GM18951 (cell line): ENCODE measurements at regions of chr9 and their contacts with region 1.

Region 1: DNA sequence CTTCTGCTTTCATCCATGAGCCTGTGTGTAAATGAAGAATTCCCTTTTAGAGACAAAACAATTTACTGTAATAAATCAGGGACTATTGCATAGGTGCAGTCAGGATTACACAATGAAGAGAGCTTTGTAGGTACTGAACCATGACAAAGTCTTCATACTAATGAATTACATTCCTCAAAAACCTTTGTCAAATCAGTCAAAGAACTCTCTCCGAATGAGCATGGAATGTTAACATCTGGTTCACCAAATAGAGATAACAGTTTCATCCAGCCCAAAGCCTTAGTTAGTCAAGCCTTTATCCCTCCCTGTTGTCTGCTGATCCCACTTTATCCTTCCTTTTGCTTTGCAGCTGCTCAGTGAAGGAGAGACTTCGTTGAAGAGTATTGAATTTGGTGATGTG is 62.9 kb upstream of the DMRTA1 start:
- POLR2A ChIP-seq: no peak

Region 2: DNA sequence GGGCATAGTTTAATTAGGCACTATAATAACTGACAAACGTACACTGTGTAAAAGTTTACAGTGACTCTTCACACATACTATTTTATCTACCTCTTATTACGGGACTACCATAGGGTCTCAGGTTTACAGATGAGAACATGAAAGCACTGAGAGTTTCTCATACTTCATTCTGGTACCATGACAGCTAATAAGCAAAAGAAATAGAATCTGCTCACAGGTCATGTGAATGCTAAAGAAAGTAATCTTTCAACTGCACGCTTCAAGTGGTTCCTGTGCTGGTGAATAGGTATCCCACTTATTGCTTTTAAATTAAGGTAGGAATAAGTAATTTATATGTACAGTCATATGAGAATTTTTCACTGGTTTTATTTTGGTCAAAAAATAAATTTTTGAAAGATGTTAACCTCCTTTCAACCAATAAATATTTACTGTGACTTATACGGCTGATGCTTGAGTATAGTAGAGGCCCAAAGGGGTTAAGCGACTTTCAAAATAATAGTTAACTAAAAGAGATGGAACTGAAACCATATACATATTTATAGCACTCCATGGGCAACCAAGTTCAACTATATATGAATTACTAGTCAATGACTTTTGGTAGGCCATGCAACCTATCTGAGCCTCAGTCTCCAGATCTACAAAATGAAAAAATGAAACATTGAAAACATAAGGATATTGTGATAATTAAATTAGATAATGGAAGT is 397.6 kb before region 1 on chr9:
- in situ Hi-C with region 1: no loop called
- POLR2A ChIP-seq: no peak

Region 3: DNA sequence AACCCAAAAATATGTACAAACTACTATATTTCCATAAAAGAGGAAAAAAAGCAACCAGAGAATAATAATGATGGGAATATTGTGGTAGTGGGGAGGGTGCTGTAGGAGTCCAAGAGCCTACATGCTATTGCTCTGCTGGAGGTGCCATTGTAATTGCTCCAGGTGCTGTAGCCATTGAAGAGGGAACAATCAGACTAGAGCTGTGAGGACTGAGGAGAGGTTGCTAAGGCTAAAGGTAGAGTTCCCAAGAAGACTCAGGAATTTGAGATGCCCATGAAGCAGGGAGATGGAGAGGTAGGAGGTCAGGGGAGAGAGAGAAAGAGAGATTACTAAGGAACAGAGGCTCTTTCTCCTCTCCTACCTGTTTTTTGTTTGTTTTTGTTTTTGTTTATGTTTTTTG is 456.9 kb after region 1 on chr9:
- in situ Hi-C with region 1: loop called (anchors 10 kb)
- POLR2A ChIP-seq: no peak